Calu3 (cell line): ENCODE measurements at regions of chr4 and their contacts with region 1.

Region 1: DNA sequence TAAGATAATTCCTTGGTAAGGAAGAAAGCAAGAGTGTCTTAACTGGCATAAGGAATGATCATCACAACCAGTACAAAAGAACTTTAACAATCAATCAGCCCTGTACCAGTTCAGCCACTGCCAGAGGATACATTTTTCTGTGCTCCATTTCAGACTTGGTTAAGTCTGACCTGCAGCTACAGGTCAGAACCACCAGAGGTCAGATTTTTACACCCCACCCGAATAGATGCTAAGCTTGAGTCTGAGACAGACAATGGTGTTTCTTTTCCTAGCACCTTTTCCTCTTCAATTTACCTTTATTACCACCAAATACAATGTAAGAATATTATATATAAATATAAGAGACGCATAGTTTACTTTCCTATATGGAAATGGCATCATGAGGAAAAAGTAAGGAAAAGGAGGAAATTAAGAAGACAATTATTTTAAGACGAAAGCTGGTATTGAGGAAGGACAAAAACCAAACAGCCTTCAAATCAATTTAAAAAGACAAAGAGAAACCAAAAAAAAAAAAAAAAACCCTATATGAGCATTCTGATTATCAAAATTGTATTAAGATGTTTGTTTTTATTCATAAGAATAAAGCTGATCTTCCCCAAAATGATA is 215.3 kb upstream of the TTC29 start:
- DNase-seq: peak; percentile 16
- H3K4me3 Mint-ChIP-seq: no peak overlapping the region
- H3K27ac Mint-ChIP-seq: no peak overlapping the region
- H3K4me1 Mint-ChIP-seq: no peaks in the 10 kb centered on the region
- H3K27me3 Mint-ChIP-seq: no peaks in the 10 kb centered on the region
- CTCF ChIP-seq: peak; percentile 41

Region 2: DNA sequence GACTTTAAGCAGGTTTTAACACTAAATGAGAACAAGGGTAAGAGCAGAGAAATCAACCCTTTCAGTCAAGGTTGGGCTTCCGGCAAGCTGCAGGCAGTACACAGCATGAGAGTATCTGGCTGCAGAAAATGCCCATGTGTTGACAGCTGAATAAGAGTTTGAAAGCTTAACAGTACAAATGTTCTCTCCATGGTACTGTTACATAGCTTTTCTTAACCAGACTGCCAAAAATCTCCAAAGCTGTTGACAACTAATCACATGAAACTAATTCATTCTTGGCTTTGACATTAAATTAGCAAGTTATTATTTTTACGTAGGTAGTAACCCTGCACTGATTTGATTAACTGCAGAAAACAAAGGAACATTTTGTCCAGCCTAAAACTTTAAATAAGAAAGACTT is 792.8 kb before region 1 on chr4:
- CTCF ChIA-PET with region 1: no interaction called
- intact Hi-C with region 1: no loop called
- DNase-seq: no peak
- H3K4me3 Mint-ChIP-seq: no peak overlapping the region
- H3K27ac Mint-ChIP-seq: no peak overlapping the region
- H3K4me1 Mint-ChIP-seq: no peaks in the 10 kb centered on the region
- H3K27me3 Mint-ChIP-seq: no peaks in the 10 kb centered on the region
- CTCF ChIP-seq: no peak

Region 3: DNA sequence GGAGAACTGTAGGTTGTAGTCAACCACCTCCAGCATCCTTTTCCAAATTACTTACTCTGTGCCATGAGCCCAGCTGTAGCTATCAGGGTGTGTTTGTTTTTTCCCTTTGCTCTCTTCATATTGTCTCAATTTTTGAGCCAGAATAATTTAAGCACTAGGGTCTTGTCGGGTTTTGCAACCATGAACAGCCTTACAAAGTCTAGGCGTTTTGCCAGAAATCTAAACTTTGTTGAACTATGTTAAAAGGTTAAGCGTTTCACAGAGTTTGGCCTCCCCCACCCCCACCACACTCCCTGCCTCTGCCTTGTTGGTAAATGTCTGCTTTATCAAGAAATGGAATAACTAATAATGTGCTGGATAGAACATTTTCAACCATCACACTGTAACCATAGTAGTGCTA is 24.7 kb before region 1 on chr4:
- CTCF ChIA-PET with region 1: interaction called, 11 read pairs
- intact Hi-C with region 1: no loop called
- DNase-seq: no peak
- H3K4me3 Mint-ChIP-seq: no peak overlapping the region
- H3K27ac Mint-ChIP-seq: no peak overlapping the region
- H3K4me1 Mint-ChIP-seq: no peaks in the 10 kb centered on the region
- H3K27me3 Mint-ChIP-seq: no peaks in the 10 kb centered on the region
- CTCF ChIP-seq: no peak

Region 4: DNA sequence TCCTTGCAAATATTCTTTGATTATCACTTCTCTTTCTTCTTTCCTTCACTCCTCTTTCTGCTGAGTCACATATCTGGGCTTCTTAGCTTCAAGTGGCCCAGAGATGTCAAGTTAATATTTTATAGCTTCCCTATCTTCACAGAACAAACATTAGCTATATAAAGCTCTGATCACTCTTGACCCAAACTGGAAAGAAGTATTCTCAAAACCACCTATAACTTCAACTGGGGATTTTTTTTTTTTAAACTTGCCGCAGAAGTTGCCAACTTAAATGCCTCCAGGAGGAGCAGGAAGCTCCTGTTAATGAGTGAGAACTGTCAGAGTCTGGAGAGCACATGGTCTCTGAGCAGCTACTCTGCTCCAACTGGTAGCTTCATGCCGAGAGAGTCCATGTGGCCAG is 86.6 kb after region 1 on chr4:
- CTCF ChIA-PET with region 1: no interaction called
- intact Hi-C with region 1: no loop called
- DNase-seq: no peak
- H3K4me3 Mint-ChIP-seq: no peak overlapping the region
- H3K27ac Mint-ChIP-seq: peak overlapping the region; percentile 14
- H3K4me1 Mint-ChIP-seq: peaks cover 24% of the 10 kb centered on the region
- H3K27me3 Mint-ChIP-seq: no peaks in the 10 kb centered on the region
- CTCF ChIP-seq: no peak

Region 5: DNA sequence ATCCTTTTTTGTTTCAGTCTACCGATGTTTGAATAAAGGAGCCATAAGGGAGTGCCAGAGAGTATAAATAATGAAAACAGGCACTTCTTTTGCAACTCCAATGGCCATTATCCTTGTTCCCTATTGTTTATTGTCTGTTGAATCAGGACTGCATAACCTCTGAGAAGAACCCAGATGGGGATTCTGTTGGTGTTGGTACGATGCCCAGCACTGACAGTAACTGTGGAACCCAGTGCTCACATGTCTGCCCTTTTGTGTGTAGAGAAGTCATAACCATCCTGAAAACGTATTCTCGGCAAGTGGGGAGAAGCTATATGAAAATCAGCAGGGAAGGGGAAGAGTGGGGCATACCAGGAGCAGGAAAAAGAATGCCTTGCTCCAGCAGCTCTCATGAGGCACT is 124.7 kb after region 1 on chr4:
- CTCF ChIA-PET with region 1: no interaction called
- intact Hi-C with region 1: loop called (anchors 2 kb)
- DNase-seq: no peak
- H3K4me3 Mint-ChIP-seq: no peak overlapping the region
- H3K27ac Mint-ChIP-seq: no peak overlapping the region
- H3K4me1 Mint-ChIP-seq: peaks cover 23% of the 10 kb centered on the region
- H3K27me3 Mint-ChIP-seq: no peaks in the 10 kb centered on the region
- CTCF ChIP-seq: no peak

Region 6: DNA sequence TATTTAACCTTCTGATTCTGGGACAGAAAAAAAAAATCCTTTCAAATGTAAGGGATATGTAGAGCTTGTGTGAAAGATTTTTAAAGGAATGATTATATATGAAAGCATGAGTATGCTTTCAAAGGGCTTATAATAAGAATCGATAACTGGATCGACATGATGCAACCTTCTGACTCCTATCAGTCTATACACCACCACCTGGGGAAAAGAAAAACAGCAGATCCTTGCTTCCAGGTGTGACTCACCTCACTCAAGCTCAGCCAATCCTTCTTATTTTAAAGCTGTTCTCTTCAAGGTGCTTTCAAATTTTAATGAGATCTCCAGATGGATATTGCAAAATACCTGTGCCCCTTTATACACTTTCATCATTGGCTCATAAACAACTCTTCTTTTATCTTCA is 217.8 kb after region 1 on chr4:
- CTCF ChIA-PET with region 1: interaction called, 10 read pairs
- intact Hi-C with region 1: loop called (anchors 1 kb)
- DNase-seq: peak; percentile 27
- H3K4me3 Mint-ChIP-seq: no peak overlapping the region
- H3K27ac Mint-ChIP-seq: peak overlapping the region; percentile 47
- H3K4me1 Mint-ChIP-seq: no peaks in the 10 kb centered on the region
- H3K27me3 Mint-ChIP-seq: no peaks in the 10 kb centered on the region
- CTCF ChIP-seq: no peak

Region 7: GRCh38 chr4:147518846-147519767 is 358.1 kb after region 1 on chr4:
- CTCF ChIA-PET with region 1: interaction called, 6 read pairs
- intact Hi-C with region 1: loop called (anchors 2 kb)
- DNase-seq: peak; percentile 54
- H3K4me3 Mint-ChIP-seq: no peak overlapping the region
- H3K27ac Mint-ChIP-seq: no peak overlapping the region
- H3K4me1 Mint-ChIP-seq: no peaks in the 10 kb centered on the region
- H3K27me3 Mint-ChIP-seq: no peaks in the 10 kb centered on the region
- CTCF ChIP-seq: peak; percentile 49